ENCODE measurements at regions of chr17 and their contacts with region 1.

Region 1: GRCh38 chr17:75319904-75320691 is 30.9 kb upstream of the SLC25A19 start:
- DNase-seq: peak; percentile 16
- H3K4me3 ChIP-seq: no peak overlapping the region
- H3K27ac ChIP-seq: peak overlapping the region; percentile 11
- H3K27me3 ChIP-seq: no peaks in the 10 kb centered on the region
- CTCF ChIP-seq: no peak

Region 2: GRCh38 chr17:75338335-75338734 is 18.2 kb after region 1 on chr17:
- CTCF ChIA-PET with region 1: interaction called, 26 read pairs
- POLR2A ChIA-PET with region 1: interaction called, 4 read pairs
- DNase-seq: peak; percentile 7
- H3K4me3 ChIP-seq: no peak overlapping the region
- H3K27ac ChIP-seq: peak overlapping the region; percentile 57
- H3K27me3 ChIP-seq: no peaks in the 10 kb centered on the region
- CTCF ChIP-seq: no peak

Region 3: GRCh38 chr17:75380315-75380714 is 60.2 kb after region 1 on chr17:
- CTCF ChIA-PET with region 1: interaction called, 22 read pairs
- POLR2A ChIA-PET with region 1: interaction called, 3 read pairs
- DNase-seq: peak; percentile 32
- H3K4me3 ChIP-seq: no peak overlapping the region
- H3K27ac ChIP-seq: no peak overlapping the region
- H3K27me3 ChIP-seq: no peaks in the 10 kb centered on the region
- CTCF ChIP-seq: peak; percentile 26; the same call in 1 of the 2 replicates

Region 4: GRCh38 chr17:75400326-75400939 is 80.3 kb after region 1 on chr17:
- CTCF ChIA-PET with region 1: interaction called, 21 read pairs
- POLR2A ChIA-PET with region 1: interaction called, 13 read pairs
- DNase-seq: no peak
- H3K4me3 ChIP-seq: no peak overlapping the region
- H3K27ac ChIP-seq: no peak overlapping the region
- H3K27me3 ChIP-seq: no peaks in the 10 kb centered on the region
- CTCF ChIP-seq: no peak

Region 5: GRCh38 chr17:75412455-75413317 is 92.6 kb after region 1 on chr17:
- CTCF ChIA-PET with region 1: interaction called, 64 read pairs
- POLR2A ChIA-PET with region 1: no interaction called
- DNase-seq: peak; percentile 46
- H3K4me3 ChIP-seq: no peak overlapping the region
- H3K27ac ChIP-seq: no peak overlapping the region
- H3K27me3 ChIP-seq: peaks cover 13% of the 10 kb centered on the region
- CTCF ChIP-seq: peak; percentile 87